ENCODE measurements at regions of chr7 and their contacts with region 1.

Region 1: DNA sequence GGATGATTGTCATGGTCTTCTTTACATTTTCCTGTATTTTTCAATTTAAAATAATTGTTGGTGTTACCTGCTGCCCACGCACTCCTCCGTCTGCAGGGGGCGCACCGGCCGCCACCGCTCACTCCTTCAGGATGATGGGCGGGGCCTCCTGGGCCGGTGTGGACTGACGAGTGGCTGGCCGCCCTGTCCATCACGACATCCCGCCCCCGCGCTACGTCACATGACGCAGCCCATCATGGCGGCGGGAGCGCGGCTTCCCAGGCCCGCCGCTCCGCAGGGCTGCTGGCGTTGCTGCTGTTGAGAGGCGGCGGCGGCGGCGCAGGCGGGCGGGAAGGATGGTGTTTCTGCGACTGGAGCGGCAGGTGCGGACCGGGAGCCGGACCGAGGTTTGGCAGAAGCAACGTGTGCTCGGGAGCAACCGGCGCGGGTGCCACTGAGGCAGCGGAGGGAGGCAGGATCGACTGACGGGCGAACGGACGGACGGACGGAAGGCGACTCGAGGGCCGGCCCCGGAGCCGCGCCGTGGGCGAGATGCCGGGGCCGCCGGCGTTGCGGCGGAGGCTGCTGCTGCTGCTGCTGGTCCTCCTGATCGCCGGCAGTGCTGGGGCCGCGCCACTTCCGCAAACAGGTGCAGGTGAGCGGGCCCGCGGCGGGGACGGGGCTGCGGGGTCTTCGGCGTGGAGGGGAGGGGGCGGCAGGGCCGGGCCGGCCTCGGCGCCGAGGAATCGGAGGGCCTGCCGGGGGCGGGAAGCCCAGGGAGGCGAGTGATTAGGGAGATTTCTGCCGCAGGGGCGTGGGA is at the start of gene LMTK2:
- DNase-seq: peak; percentile 99
- ATAC-seq: peak; percentile 100
- H3K4me3 Mint-ChIP-seq: peak within 1 kb of the TSS; percentile 97
- H3K27ac Mint-ChIP-seq: peak within 1 kb of the TSS; percentile 86
- H3K4me1 Mint-ChIP-seq: peaks cover 16% of the 10 kb centered on the region
- H3K27me3 Mint-ChIP-seq: peaks cover 8% of the 10 kb centered on the region
- CTCF ChIP-seq: peak; percentile 80
- total RNA-seq, gene LMTK2: 9.6 and 10.4 TPM in 2 replicates

Region 2: GRCh38 chr7:97513326-97513725 is 593.5 kb before region 1 on chr7:
- CTCF ChIA-PET with region 1: no interaction called
- POLR2A ChIA-PET with region 1: no interaction called
- intact Hi-C with region 1: no loop called
- DNase-seq: no peak
- ATAC-seq: no peak
- H3K4me3 Mint-ChIP-seq: no peak overlapping the region
- H3K27ac Mint-ChIP-seq: no peak overlapping the region
- H3K4me1 Mint-ChIP-seq: no peaks in the 10 kb centered on the region
- H3K27me3 Mint-ChIP-seq: no peaks in the 10 kb centered on the region
- CTCF ChIP-seq: no peak

Region 3: DNA sequence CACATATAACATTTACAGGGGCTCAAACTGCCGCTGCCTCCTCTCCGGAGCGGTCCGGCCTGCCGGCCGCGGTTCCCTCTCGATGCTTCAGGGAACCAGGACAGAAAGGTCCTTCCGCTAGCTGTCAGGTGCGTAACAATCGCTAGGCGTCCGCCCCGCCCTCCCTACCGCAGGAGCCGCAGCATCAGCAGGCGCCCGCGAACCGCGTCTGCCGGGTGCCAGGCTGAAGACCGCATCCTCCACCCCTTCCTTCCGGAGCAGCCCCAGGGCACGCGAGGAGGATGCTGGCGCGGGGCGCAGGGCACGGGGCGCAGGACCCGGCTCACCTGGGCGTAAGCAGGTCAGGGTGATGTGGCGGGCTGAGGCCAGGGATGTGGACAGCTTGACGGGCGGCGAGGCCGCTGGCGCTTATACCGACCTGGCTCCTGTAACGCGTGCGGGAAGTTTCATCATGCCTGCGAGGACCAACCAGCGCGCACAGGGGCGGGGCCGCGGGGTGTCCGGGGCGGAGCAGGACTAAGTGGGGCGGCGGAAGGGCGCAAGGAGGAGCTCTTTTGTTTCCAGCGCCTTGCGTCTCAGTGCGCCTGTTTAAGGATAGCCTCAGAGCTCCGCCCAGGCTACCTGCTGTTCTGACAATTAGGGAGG is 234.7 kb before region 1 on chr7 and contains the start of gene ASNS:
- CTCF ChIA-PET with region 1: no interaction called
- POLR2A ChIA-PET with region 1: interaction called, 3 read pairs
- intact Hi-C with region 1: loop called (anchors 2 kb)
- DNase-seq: peak; percentile 86
- ATAC-seq: peak; percentile 92
- H3K4me3 Mint-ChIP-seq: peak within 1 kb of the TSS; percentile 89
- H3K27ac Mint-ChIP-seq: peak within 1 kb of the TSS; percentile 90
- H3K4me1 Mint-ChIP-seq: peaks cover 13% of the 10 kb centered on the region
- H3K27me3 Mint-ChIP-seq: no peaks in the 10 kb centered on the region
- CTCF ChIP-seq: no peak
- total RNA-seq, gene ASNS: 92.1 and 101 TPM in 2 replicates

Region 4: GRCh38 chr7:98021588-98022351 is 85.1 kb before region 1 on chr7:
- CTCF ChIA-PET with region 1: interaction called, 12 read pairs
- POLR2A ChIA-PET with region 1: no interaction called
- intact Hi-C with region 1: loop called (anchors 1 kb)
- DNase-seq: peak; percentile 76
- ATAC-seq: peak; percentile 81
- H3K4me3 Mint-ChIP-seq: no peak overlapping the region
- H3K27ac Mint-ChIP-seq: no peak overlapping the region
- H3K4me1 Mint-ChIP-seq: peaks cover 3% of the 10 kb centered on the region
- H3K27me3 Mint-ChIP-seq: peaks cover 20% of the 10 kb centered on the region
- CTCF ChIP-seq: peak; percentile 58

Region 5: GRCh38 chr7:98086281-98086718 is 20.5 kb before region 1 on chr7:
- CTCF ChIA-PET with region 1: no interaction called
- POLR2A ChIA-PET with region 1: no interaction called
- intact Hi-C with region 1: no loop called
- DNase-seq: no peak
- ATAC-seq: no peak
- H3K4me3 Mint-ChIP-seq: no peak overlapping the region
- H3K27ac Mint-ChIP-seq: no peak overlapping the region
- H3K4me1 Mint-ChIP-seq: no peaks in the 10 kb centered on the region
- H3K27me3 Mint-ChIP-seq: peaks cover 7% of the 10 kb centered on the region
- CTCF ChIP-seq: no peak

Region 6: DNA sequence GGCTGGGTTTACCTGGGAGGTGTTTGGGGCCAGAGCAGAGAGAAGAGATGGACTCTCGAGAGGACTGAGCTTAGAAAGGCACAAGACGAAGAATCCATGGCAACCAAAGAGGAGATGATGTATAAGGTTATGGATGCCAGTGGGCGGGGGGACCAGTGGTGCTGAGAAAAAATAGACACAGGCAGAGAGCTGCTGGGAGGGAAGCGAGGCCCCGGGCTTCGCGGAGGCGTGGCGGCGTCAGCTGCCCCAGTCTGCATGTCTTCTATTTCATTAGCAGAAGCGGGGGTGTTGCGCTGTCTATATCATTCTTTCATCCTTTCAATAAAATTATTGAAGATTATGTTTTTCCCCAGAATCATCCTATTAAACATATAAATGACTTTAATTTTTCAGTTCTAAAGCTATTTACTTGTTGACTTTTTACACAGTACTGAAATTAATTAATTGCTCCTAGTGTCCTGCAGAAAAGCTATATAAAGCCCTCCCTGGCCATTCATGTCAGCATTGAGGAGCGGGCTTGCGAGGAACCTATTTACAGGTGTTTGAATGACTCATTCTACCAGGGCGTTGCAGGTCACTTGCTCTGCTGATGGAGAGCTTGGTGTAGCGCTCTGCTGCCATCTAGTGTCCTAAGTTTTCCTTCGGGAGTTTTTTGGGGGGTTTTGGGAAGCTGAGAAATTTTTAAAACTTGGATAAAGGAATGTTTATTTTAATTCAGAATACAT is 61.5 kb after region 1 on chr7:
- CTCF ChIA-PET with region 1: interaction called, 66 read pairs
- POLR2A ChIA-PET with region 1: interaction called, 5 read pairs
- intact Hi-C with region 1: loop called (anchors 1 kb)
- DNase-seq: peak; percentile 34
- ATAC-seq: peak; percentile 66
- H3K4me3 Mint-ChIP-seq: no peak overlapping the region
- H3K27ac Mint-ChIP-seq: no peak overlapping the region
- H3K4me1 Mint-ChIP-seq: peaks cover 10% of the 10 kb centered on the region
- H3K27me3 Mint-ChIP-seq: peaks cover 2% of the 10 kb centered on the region
- CTCF ChIP-seq: peak; percentile 56

Region 7: DNA sequence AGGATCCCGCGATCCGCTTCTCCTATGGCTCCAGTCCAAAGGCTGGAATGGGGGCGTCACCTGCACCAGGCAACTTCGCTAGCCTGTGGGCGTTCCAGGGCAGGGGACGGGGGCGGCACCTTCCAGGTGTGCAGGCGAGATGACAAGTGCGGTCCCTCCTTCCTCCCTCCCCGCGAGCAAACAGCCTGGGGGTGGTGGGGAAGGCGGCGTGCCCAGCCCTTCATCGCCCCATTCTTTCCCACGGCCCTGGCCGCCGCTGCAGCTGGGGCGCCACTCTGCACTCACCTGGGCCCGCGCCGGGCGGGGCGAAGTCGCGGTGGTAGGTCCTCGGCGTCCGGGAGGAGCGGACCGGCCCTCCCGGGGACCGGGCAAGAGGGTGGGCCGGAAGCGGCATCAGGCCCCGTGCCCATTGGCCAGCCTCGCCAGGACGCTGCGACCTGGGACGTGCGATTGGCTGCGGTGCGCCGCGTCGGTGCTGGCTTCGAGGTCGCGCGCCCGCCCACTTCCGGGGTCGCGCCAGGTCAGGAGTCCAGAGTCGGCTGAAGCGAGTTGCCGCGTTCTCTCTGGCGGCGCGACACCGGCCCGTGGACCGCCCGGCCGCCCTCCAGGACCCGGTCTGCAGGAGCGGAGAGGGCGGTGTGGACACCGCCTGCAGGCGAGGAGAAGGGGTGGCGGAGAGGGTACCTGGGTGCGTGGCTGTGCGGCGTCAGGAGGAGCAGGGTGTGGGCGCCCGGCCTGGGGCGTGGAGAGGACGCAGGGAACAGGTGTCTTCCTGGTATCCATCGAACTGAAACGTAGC is 145.2 kb after region 1 on chr7 and contains the start of gene TECPR1:
- CTCF ChIA-PET with region 1: interaction called, 3 read pairs
- POLR2A ChIA-PET with region 1: no interaction called
- intact Hi-C with region 1: loop called (anchors 2 kb)
- DNase-seq: peak; percentile 85
- ATAC-seq: peak; percentile 96
- H3K4me3 Mint-ChIP-seq: peak within 1 kb of the TSS; percentile 94
- H3K27ac Mint-ChIP-seq: peak within 1 kb of the TSS; percentile 80
- H3K4me1 Mint-ChIP-seq: peaks cover 39% of the 10 kb centered on the region
- H3K27me3 Mint-ChIP-seq: no peaks in the 10 kb centered on the region
- CTCF ChIP-seq: no peak
- total RNA-seq, gene TECPR1: 24.6 and 34.5 TPM in 2 replicates

Region 8: GRCh38 chr7:98400542-98401340 is 293.9 kb after region 1 on chr7 and contains the start of gene BAIAP2L1:
- CTCF ChIA-PET with region 1: no interaction called
- POLR2A ChIA-PET with region 1: no interaction called
- intact Hi-C with region 1: loop called (anchors 1 kb)
- DNase-seq: peak; percentile 87
- ATAC-seq: peak; percentile 92
- H3K4me3 Mint-ChIP-seq: peak within 1 kb of the TSS; percentile 76
- H3K27ac Mint-ChIP-seq: peak within 1 kb of the TSS; percentile 35
- H3K4me1 Mint-ChIP-seq: peaks cover 27% of the 10 kb centered on the region
- H3K27me3 Mint-ChIP-seq: peaks cover 26% of the 10 kb centered on the region
- CTCF ChIP-seq: no peak
- total RNA-seq, gene BAIAP2L1: 8.1 and 10.4 TPM in 2 replicates

Region 9: GRCh38 chr7:99143853-99144672 is 1037.2 kb after region 1 on chr7 and contains the start of gene SMURF1:
- CTCF ChIA-PET with region 1: no interaction called
- POLR2A ChIA-PET with region 1: no interaction called
- intact Hi-C with region 1: loop called (anchors 2 kb)
- DNase-seq: peak; percentile 86
- ATAC-seq: peak; percentile 55
- H3K4me3 Mint-ChIP-seq: peak within 1 kb of the TSS; percentile 89
- H3K27ac Mint-ChIP-seq: peak within 1 kb of the TSS; percentile 81
- H3K4me1 Mint-ChIP-seq: peaks cover 39% of the 10 kb centered on the region
- H3K27me3 Mint-ChIP-seq: peaks cover 7% of the 10 kb centered on the region
- CTCF ChIP-seq: no peak
- total RNA-seq, gene SMURF1: 21.6 and 23.1 TPM in 2 replicates

Measured in activated B cell treated with CpG ODN at 0.5 μM for 24 hours (primary cell).